Tibial artery (tissue), 4 donors: ENCODE measurements at regions of chr1 and their contacts with region 1.

Region 1: DNA sequence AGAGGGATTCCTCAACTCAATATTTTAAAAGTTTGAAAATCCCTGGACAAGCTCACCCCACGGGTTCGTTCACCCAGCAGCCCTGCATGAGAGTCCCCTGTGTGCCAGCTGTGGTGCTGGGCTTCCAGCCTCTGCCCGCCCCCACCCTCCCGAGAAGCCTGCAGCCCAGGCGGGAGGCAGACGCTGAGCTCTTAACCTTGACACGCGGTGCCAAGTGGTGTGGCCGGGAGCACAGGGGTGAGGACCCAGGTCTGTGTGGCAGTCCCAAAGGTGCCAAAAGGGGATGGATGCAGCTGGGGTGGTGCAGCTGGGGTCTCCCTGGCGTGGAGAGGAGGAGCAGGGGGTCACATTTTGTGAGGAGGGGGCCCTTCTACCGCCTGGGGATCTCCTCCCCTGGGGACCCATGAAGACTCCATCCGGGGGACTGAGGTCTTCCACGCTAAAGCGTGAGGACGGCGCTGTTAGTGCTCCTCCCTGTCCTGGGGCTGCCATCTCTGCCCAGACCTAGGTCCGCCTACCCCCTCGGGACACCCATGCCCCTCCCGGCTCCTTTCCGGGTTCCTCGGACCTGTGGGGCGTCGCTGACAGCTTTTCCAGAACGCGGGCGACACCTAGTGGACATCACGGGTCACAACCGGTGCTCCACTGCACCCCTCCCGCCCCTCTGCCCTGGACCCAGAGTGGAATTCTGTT is 12.9 kb downstream of the PLA2G2F start:
- DNase-seq: peak; percentile 74 to 81
- H3K4me3 ChIP-seq: peak overlapping the region in 1 of 2 donors; percentile 36
- H3K27ac ChIP-seq: no peak overlapping the region
- H3K4me1 ChIP-seq: peaks cover 0 to 14% (median 8%) of the 10 kb centered on the region in 4 donors
- H3K27me3 ChIP-seq: peaks cover 0 to 42% of the 10 kb centered on the region in 2 donors
- CTCF ChIP-seq: peak; percentile 90 to 92

Region 2: DNA sequence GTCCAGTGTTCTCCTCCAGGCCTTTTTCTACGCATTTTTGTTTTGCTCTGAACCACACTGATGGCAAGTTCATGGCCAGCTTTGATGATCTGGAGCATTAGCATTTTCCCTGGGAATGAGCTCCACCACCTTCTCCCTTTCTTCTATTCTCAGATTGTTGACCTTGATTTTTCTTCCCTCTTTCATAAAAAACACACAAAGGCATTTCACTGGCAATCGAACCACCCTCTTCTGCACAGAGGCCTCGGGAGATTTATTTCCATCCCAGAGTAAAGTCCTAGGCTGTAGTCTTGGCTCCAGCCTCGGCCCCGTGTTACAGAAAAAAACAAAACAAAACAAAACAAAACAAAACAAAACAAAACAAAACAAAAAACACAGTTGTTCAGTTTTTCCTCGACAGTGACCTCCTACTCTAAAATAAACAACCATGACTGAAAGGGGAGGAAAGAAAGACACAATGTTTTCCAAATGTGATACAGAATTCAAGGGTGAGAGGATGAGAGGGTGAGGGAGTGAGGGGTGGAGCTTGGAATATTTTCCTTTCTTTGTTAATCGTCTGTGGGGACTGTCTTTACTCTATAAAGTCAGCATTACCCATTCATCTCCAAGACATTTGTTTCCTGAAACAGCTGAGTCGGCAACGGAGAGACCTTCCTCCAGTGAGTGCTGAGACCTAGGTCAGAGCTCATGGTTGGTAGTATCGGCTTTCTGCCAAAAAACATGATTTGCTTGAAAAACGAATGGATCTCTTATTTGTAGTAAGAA is 307.1 kb before region 1 on chr1:
- intact Hi-C with region 1: no loop called
- DNase-seq: no peak
- H3K4me3 ChIP-seq: no peak overlapping the region
- H3K27ac ChIP-seq: no peak overlapping the region
- H3K4me1 ChIP-seq: no peaks in the 10 kb centered on the region
- H3K27me3 ChIP-seq: peaks cover 0 to 8% of the 10 kb centered on the region in 2 donors
- CTCF ChIP-seq: no peak

Region 3: GRCh38 chr1:19918057-19918456 is 234.0 kb before region 1 on chr1:
- intact Hi-C with region 1: loop called (anchors 1 kb)
- DNase-seq: peak; percentile 80 to 85
- H3K4me3 ChIP-seq: no peak overlapping the region
- H3K27ac ChIP-seq: no peak overlapping the region
- H3K4me1 ChIP-seq: no peaks in the 10 kb centered on the region
- H3K27me3 ChIP-seq: peaks cover 0 to 12% of the 10 kb centered on the region in 2 donors
- CTCF ChIP-seq: peak; percentile 79 to 91

Region 4: DNA sequence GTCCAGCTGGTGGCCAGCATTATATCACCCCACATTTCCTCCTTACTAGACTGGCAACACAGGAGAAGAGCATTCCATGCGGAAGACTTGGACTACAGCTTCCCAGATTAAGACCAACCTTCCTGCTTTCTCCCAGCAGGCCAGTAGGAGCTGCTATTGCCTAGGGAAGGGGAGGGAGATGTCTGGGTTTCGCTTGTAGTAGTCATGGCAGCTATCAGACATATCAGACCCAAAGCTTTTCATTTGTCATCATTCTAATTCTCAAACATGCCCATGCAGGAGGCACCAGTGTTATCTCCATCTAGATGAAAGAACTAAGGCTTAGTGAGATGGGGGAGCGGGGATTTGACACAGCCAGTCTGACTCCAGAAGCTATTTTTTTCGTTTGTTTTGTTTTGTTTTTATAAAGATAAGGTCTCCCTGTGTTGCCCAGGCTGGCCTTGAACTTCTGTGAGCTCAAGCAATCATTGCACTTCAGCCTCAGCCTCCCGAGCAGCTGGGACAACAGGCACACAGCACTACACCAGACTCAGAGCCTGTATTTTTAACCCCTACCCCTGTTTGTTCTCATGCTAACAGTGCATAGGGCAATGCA is 177.1 kb before region 1 on chr1:
- intact Hi-C with region 1: loop called (anchors 5 kb)
- DNase-seq: peak; percentile 47 to 69
- H3K4me3 ChIP-seq: no peak overlapping the region
- H3K27ac ChIP-seq: no peak overlapping the region
- H3K4me1 ChIP-seq: no peaks in the 10 kb centered on the region
- H3K27me3 ChIP-seq: peaks cover 0 to 12% of the 10 kb centered on the region in 2 donors
- CTCF ChIP-seq: peak; percentile 65 to 68